ENCODE measurements at regions of chr17 and their contacts with region 1.

Region 1: DNA sequence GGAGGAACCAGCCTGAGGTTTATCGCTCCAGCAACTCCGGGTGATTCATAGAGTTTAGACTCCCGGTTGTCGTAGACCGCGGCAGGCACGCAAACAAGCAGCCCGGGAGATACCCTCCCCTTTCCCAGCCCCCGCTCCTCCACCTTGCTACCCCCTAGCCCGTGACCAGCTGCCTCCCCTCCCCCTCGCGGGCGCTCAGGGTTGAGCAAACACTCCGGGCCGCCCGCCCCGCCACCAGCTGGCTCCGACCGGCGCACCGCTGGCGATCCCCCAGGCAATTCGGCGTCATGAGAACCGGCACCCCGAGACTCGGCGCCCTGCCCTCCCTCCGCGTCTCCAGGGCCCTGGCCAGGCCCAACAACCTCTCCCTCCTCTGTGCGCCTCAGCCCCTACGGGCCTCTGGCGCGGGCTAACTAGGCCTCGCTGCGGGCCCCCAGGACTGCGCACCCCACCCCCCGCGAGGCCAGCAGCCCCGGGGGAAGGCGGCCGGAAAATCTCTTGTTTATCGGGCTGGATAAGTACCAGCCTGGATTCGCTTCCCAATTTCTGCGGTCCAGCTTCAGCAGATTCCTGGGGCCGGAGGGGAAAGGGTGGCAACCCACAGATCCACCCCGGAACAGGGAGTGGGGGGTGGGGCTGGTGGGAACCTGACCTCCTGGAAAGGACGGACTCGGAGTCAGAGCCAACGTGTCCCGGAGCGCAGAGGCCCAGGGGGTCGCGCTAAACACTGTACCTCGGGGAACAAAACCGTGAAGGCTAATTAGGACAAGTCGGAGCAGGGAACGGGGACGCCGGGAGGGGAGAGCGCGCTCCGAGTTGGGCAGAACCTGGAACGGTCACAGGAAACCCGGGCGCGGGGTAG is 951 bp upstream of the GPRC5C start:
- DNase-seq: peak; percentile 93
- H3K4me3 Mint-ChIP-seq: peak overlapping the region; percentile 88
- H3K27ac Mint-ChIP-seq: peak overlapping the region; percentile 98
- H3K4me1 Mint-ChIP-seq: peaks cover 34% of the 10 kb centered on the region
- H3K27me3 Mint-ChIP-seq: no peaks in the 10 kb centered on the region
- CTCF ChIP-seq: no peak

Region 2: GRCh38 chr17:74417178-74418045 is 13.5 kb before region 1 on chr17:
- CTCF ChIA-PET with region 1: no interaction called
- POLR2A ChIA-PET with region 1: interaction called, 28 read pairs
- intact Hi-C with region 1: loop called (anchors 1 kb)
- DNase-seq: peak; percentile 87
- H3K4me3 Mint-ChIP-seq: no peak overlapping the region
- H3K27ac Mint-ChIP-seq: no peak overlapping the region
- H3K4me1 Mint-ChIP-seq: peaks cover 5% of the 10 kb centered on the region
- H3K27me3 Mint-ChIP-seq: no peaks in the 10 kb centered on the region
- CTCF ChIP-seq: no peak

Region 3: GRCh38 chr17:74442670-74443515 is 12.0 kb after region 1 on chr17:
- CTCF ChIA-PET with region 1: interaction called, 4 read pairs
- POLR2A ChIA-PET with region 1: interaction called, 43 read pairs
- intact Hi-C with region 1: loop called (anchors 1 kb)
- DNase-seq: peak; percentile 91
- H3K4me3 Mint-ChIP-seq: peak overlapping the region; percentile 62
- H3K27ac Mint-ChIP-seq: peak overlapping the region; percentile 78
- H3K4me1 Mint-ChIP-seq: peaks cover 39% of the 10 kb centered on the region
- H3K27me3 Mint-ChIP-seq: no peaks in the 10 kb centered on the region
- CTCF ChIP-seq: no peak

Measured in MCF 10A (cell line).